PC-9 (cell line): ENCODE measurements at regions of chr2 and their contacts with region 1.

Region 1: DNA sequence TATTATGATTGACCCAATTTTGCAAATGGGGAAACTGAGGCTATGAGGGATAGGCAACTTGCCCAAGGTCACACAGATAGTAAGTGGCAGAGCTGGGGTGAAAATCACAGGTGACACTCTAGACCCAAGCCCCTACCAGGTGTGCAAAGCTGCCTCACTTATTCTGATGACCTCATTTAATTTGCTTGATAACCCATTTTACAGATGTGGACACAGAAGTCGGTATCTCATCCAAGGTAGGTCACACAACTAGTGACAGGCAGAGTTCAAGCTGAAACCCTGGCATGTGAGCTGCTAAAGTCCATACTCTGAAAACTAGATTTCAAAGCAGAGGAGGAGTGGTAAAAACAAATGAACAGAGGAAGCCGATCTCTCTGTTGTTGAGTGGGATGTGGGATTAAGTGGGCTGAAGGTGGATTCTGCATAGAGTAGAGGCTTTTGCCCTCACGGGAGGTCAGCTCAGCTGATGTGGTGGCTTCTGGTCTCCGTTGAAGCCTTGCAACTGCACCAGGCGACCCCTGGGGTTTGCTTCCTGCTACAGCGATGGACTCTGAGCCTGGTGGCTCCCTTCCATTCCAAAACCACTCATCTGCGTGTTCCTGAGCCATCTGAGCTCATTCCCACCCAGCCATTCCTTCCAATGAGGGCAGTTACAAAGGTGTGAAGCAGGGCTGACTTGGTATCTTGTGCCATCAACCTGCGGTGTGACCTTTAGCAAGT is 164.3 kb upstream of the FHL2 start:
- DNase-seq: no peak
- H3K4me3 ChIP-seq: no peak overlapping the region
- H3K27ac ChIP-seq: no peak overlapping the region
- H3K4me1 ChIP-seq: no peaks in the 10 kb centered on the region
- H3K27me3 ChIP-seq: peaks cover 67% of the 10 kb centered on the region
- CTCF ChIP-seq: no peak

Region 2: DNA sequence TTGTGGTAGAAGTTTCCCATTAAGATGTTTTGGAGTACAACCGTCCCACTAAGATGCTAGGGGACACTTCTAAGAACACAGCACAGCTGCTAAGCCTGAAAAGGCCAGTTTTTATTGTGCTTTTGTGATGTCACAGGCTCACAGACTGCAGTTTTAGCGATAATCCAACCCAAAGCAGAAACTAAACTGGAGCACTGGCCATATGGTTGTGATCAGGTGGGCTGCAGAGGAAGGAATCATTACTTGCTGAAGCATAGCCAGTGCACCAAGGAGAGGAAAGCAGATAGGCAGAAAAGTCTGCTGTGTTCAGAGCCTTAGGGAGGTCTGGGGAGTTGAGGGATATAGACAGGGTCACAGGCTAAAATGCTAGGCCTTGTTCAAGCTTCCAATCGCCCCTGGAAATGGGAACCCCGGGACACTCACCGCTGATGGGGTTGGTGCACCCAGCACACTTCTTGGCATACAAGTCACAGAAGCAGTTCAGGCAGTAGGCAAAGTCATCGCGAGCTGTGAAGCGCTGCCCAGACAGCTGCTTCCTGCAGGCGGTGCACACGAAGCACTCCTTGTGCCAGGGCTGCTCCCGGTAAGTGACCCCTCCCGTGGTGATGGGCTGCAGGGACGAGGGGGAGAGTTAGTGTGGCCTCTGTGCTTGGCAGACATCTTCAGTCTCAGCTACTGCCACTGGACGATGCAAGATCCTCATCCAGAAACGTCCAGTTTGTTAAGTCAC is 200.1 kb before region 1 on chr2:
- CTCF ChIA-PET with region 1: no interaction called
- POLR2A ChIA-PET with region 1: no interaction called
- intact Hi-C with region 1: no loop called
- DNase-seq: no peak
- H3K4me3 ChIP-seq: no peak overlapping the region
- H3K27ac ChIP-seq: no peak overlapping the region
- H3K4me1 ChIP-seq: no peaks in the 10 kb centered on the region
- H3K27me3 ChIP-seq: no peaks in the 10 kb centered on the region
- CTCF ChIP-seq: no peak

Region 3: DNA sequence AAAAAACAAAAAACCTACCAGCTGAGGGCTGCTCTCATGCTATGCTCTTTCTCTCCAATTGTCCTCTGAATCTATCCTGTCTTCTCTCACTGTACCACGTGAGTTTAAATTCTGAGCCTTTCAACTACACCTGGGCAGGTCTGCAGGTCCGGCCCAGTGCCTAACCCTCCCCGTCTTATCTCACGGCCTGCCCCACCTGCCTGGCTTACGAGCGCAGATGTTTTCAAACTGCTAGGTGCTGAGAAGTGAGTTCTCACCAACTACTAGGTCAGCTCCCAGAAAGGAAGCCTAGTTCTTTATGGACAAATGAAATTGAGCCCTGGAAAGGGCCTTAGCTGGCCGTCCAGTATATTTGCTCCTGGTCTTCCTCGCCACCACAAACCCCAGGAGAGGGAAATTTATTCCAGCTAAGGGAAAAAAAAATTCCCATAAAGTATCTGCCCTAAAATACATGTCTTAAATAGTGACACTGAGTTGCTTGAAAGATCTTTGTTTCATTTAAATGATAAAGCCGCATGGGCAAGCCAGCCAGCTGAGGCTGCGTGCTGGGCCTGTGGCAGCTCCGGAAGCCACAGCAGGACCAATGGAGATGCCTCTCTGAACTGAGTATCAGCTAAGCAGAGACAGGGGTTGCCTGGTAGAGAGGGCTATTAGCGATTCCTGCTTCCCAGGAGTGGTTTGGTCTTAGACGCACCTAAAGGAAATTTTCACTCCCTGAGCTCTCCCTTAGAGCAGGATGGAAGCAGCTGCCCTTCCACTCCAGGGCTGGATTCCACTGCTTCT is 89.0 kb after region 1 on chr2:
- CTCF ChIA-PET with region 1: no interaction called
- POLR2A ChIA-PET with region 1: interaction called, 17 read pairs
- intact Hi-C with region 1: no loop called
- DNase-seq: no peak
- H3K4me3 ChIP-seq: no peak overlapping the region
- H3K27ac ChIP-seq: no peak overlapping the region
- H3K4me1 ChIP-seq: no peaks in the 10 kb centered on the region
- H3K27me3 ChIP-seq: peaks cover 24% of the 10 kb centered on the region
- CTCF ChIP-seq: no peak